Activated B cell treated with CpG ODN at 0.5 μM for 24 hours (primary cell): ENCODE measurements at regions of chr7 and their contacts with region 1.

Region 1: DNA sequence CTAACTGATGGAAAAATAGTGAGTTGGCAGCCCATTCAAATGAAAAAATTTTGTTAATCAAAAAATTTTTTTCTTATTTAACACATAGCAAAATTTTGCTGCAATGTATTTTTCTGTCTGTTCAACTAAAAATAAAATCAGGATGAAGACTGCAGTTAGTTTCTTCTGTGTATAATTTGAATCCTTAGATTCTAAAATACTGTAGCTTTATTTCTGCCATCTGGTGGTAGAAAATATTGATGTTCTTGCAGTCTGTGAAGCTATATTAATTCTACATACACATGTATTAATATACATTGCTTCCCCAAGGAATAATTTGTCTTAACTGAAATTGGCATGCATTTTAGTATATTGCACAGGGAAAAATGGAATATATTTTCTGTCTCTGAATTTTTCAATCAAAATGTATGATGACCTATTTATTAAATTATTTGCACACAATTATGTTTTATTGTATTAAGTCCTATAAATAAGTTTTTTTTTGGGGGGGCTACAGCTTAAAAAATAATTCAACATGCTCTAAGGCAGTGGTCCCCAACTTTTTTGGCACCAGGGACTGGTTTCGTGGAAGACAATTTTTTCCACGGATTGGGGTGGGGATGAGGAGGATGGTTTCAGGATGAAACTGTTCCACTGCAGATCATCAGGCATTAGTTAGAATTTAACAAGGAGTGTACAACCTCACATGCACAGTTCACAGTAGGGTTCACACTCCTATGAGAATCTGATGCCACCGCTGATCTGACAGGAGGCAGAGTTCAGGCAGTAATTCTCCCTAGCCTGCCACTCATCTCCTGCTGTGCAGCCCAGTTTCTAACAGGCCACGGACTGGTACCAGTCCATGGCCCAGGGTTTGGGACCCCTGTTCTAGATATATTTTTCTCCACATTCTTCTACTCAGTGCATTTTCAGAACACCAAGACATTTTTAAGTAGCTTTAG is 119.4 kb downstream of the GNAT3 start:
- DNase-seq: no peak
- ATAC-seq: no peak
- H3K4me3 Mint-ChIP-seq: no peak overlapping the region
- H3K27ac Mint-ChIP-seq: no peak overlapping the region
- H3K4me1 Mint-ChIP-seq: no peaks in the 10 kb centered on the region
- H3K27me3 Mint-ChIP-seq: no peaks in the 10 kb centered on the region
- CTCF ChIP-seq: no peak

Region 2: DNA sequence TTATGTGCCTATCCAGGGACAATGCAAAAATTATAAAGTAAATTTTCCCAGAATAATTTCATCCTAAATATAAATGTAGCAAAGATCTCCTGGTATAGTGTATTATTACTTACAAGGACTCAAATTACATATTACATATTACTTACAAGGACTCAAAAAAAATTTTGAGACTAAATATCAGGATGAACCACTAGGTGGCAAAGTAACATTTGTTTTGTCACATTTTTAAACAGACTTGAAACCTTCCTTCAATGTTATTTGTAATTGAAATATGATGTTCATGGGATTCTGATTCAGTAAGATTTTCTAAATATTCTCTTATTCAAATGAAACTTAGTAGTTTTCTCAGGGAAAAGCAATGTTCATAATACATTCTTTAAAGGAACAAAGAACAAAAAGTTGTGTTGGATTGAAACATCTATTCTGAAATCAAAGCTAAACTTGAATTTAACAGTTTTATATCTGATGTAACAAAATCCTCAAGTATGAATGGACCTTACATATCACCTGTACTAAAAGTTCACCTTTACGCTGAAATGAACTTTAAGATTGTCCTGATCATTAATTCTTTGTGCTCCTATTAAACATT is 332.2 kb before region 1 on chr7:
- CTCF ChIA-PET with region 1: interaction called, 3 read pairs
- POLR2A ChIA-PET with region 1: no interaction called
- intact Hi-C with region 1: loop called (anchors 5 kb)
- DNase-seq: no peak
- ATAC-seq: no peak
- H3K4me3 Mint-ChIP-seq: no peak overlapping the region
- H3K27ac Mint-ChIP-seq: no peak overlapping the region
- H3K4me1 Mint-ChIP-seq: no peaks in the 10 kb centered on the region
- H3K27me3 Mint-ChIP-seq: no peaks in the 10 kb centered on the region
- CTCF ChIP-seq: no peak